Activated CD4-positive, alpha-beta T cell treated with anti-CD3 and anti-CD28 coated beads for 36 hours (primary cell): ENCODE measurements at regions of chr1 and their contacts with region 1.

Region 1: DNA sequence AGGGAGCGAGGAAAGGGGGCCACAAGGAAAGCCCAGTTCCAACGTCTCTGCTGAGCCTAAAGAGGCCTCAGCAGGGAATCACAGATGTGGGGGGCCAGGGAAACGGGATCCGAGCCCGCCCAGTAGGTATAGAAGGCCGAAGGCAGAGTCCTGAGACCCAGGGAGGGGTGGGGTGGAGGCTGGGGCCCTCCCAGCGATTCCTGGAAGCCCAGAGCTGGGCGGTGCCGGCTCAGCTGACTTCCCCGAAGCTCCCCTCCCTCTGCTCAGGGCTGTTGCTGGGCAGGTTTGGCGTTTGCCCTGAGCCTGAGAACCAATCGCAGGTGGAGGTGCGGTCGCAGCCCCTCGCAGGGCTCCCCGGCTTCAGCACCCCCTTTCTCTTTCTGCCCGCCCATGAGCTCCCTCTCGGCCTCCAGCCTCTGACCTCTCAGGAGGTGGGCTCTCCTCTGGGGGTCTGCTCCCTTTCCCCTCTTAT is 12.8 kb downstream of the ADAMTSL4 start:
- DNase-seq: peak; percentile 96
- ATAC-seq: peak; percentile 37
- H3K4me3 Mint-ChIP-seq: peak overlapping the region; percentile 81
- H3K27ac Mint-ChIP-seq: peak overlapping the region; percentile 99
- H3K4me1 Mint-ChIP-seq: peaks cover 57% of the 10 kb centered on the region
- H3K27me3 Mint-ChIP-seq: no peaks in the 10 kb centered on the region

Region 2: DNA sequence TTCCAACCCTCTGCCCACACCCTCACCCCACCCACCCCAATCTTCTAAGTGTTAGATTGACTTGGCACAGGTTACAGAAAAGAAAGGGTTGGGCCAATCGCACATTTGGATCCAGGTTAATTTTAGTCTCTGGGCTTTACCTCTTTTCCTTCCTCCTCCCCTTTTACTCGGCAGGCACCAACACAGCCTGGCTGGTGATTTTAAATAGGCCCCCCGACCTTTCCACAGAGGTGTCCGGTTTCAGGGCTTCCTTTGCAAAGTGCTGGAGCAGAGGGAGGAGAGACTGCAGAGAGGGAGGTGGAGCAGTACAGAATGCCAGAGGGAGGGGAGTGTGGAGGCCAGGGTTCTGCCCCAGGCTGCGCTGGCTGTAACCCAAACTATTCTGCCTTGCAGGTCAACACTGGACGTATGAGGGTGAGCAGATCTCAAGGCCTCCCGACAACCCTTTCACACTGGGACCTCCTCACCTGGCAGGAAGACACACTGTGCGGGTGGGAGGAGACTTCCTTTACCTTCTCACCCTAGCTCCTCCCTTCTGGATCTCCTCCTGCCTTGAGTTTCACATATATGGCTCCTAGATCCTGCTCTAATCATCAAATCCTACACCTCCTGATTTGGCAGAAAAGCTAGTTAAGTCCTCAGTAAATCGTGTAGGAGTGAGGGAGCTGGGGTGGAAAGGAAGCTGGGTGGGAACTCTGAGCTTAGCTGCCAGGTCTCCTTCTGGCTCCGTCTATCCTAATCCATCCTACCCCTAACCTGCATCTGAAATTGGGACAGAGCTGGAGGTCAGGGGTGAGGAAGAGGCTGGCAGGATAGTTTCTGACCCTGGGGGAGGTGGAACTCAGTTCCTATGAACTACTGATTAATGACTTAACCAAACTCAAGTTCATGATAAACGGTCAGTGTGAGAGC is 302.0 kb before region 1 on chr1:
- CTCF ChIA-PET with region 1: interaction called, 3 read pairs
- POLR2A ChIA-PET with region 1: no interaction called
- intact Hi-C with region 1: loop called (anchors 1 to 5 kb)
- DNase-seq: no peak
- ATAC-seq: no peak
- H3K4me3 Mint-ChIP-seq: no peak overlapping the region
- H3K27ac Mint-ChIP-seq: no peak overlapping the region
- H3K4me1 Mint-ChIP-seq: peaks cover 11% of the 10 kb centered on the region
- H3K27me3 Mint-ChIP-seq: peaks cover 26% of the 10 kb centered on the region

Region 3: DNA sequence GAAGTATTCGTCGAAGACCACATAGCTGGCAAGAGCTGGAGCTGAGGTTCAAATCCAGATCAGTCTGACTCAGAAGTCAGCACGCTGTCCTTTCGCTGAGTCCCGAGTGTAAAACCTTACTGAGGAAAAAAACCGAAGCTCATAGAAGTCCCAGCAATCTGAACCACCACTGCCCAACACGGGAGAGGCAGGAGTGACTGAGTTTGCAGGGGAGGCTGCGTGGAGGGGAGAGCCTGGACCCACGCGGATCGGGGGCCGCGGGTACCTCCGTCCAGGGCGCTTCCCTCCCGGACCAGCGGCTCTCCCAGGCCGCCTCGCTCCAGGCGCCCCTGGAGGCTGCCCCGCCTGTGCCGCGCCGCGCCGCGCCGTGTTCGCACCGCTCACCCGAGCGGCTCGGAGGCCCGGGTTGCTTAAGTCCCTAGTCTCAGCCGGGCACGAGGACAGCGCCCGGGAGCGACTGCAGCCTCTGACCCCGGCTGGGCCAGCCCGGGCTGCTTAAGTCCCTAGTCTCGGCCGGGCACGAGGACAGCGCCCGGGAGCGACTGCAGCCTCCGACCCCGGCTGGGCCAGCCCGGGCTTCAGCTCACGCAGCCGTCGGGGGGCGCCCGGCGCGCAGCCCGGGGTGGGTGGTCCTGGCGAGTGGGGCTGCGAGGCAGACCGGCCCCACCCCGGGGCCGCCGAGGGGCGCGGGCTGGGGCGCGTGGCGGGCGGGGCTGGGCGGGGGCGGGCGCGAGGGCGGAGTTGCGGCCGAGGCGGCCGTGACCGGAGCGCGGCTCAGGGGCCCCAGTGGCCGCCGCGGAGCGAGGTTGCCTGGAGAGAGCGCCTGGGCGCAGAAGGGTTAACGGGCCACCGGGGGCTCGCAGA is 13.1 kb before region 1 on chr1 and contains the start of gene ADAMTSL4:
- CTCF ChIA-PET with region 1: interaction called, 17 read pairs
- POLR2A ChIA-PET with region 1: interaction called, 6 read pairs
- intact Hi-C with region 1: no loop called
- DNase-seq: peak; percentile 67
- ATAC-seq: peak; percentile 82
- H3K4me3 Mint-ChIP-seq: peak within 1 kb of the TSS; percentile 69
- H3K27ac Mint-ChIP-seq: peak within 1 kb of the TSS; percentile 42
- H3K4me1 Mint-ChIP-seq: peaks cover 31% of the 10 kb centered on the region
- H3K27me3 Mint-ChIP-seq: peaks cover 31% of the 10 kb centered on the region
- total RNA-seq, gene ADAMTSL4: 0.28 to 0.59 TPM

Region 4: GRCh38 chr1:150629115-150629928 is 67.3 kb after region 1 on chr1 and contains the start of gene ENSA:
- CTCF ChIA-PET with region 1: interaction called, 461 read pairs
- POLR2A ChIA-PET with region 1: interaction called, 83 read pairs
- intact Hi-C with region 1: loop called (anchors 1 kb)
- DNase-seq: peak; percentile 97
- ATAC-seq: peak; percentile 89
- H3K4me3 Mint-ChIP-seq: no peak within 1 kb of the TSS
- H3K27ac Mint-ChIP-seq: no peak within 1 kb of the TSS
- H3K4me1 Mint-ChIP-seq: peaks cover 29% of the 10 kb centered on the region
- H3K27me3 Mint-ChIP-seq: no peaks in the 10 kb centered on the region
- total RNA-seq, gene ENSA: 197 to 240 TPM

Region 5: GRCh38 chr1:150778409-150778808 is 216.4 kb after region 1 on chr1:
- CTCF ChIA-PET with region 1: no interaction called
- POLR2A ChIA-PET with region 1: no interaction called
- intact Hi-C with region 1: no loop called
- DNase-seq: no peak
- ATAC-seq: no peak
- H3K4me3 Mint-ChIP-seq: no peak overlapping the region
- H3K27ac Mint-ChIP-seq: no peak overlapping the region
- H3K4me1 Mint-ChIP-seq: peaks cover 10% of the 10 kb centered on the region
- H3K27me3 Mint-ChIP-seq: no peaks in the 10 kb centered on the region

Region 6: DNA sequence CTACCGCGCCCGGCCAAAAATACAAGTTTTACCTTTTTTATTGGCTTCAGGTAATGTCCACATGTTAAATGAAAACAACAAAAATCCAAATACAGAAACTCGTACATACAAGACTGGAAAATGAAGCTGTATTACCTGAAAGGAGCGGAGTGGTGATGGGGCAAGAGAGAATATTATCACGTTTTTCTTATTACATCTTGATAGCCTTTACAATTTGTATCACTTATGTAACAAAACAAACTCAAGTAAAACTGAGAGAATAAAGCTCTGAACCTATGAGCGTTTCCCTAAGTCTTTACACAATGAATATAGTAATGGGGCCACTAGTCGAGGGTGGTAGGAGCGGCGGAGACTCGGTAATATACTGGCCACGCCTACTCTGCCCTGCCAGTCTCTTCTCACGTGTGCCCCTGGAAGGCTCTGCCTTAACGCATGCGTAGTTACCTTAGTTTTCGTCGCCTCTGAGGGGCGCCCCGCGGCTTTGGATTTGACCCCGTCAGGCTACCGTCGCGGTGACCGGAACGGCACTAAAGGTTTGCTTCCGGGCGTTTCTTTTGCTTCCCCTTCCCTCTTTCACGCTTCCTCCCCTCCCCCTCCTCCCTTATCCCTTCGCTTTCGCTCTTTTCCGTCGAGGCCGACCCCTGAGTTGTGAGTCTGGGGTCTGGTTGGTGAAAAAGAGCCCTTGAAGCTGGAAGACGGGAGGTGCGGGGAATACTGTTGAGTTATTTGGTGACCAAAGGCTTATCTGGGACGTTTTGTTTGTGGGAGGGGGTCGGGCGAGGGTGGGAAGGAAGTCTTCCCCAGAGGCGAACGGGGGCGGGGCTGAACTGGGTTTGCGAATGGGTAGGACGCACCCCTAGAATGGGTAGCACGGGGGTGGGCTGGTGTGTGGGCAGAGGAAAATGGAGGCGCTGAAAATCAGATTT is 364.1 kb after region 1 on chr1 and contains the start of gene SETDB1:
- CTCF ChIA-PET with region 1: interaction called, 12 read pairs
- POLR2A ChIA-PET with region 1: interaction called, 9 read pairs
- intact Hi-C with region 1: loop called (anchors 1 to 2 kb)
- DNase-seq: peak; percentile 97
- ATAC-seq: peak; percentile 89
- H3K4me3 Mint-ChIP-seq: peak within 1 kb of the TSS; percentile 89
- H3K27ac Mint-ChIP-seq: peak within 1 kb of the TSS; percentile 96
- H3K4me1 Mint-ChIP-seq: peaks cover 29% of the 10 kb centered on the region
- H3K27me3 Mint-ChIP-seq: no peaks in the 10 kb centered on the region
- total RNA-seq, gene SETDB1: 48.8 to 52.7 TPM

Region 7: GRCh38 chr1:151156515-151156819 is 594.5 kb after region 1 on chr1 and contains the start of gene TNFAIP8L2:
- CTCF ChIA-PET with region 1: no interaction called
- POLR2A ChIA-PET with region 1: no interaction called
- intact Hi-C with region 1: loop called (anchors 5 to 10 kb)
- DNase-seq: peak; percentile 91
- ATAC-seq: peak; percentile 85
- H3K4me3 Mint-ChIP-seq: peak within 1 kb of the TSS; percentile 88
- H3K27ac Mint-ChIP-seq: peak within 1 kb of the TSS; percentile 99
- H3K4me1 Mint-ChIP-seq: peaks cover 44% of the 10 kb centered on the region
- H3K27me3 Mint-ChIP-seq: no peaks in the 10 kb centered on the region
- total RNA-seq, gene TNFAIP8L2: 18.4 to 19.2 TPM